Breast epithelium (tissue), 4 donors: ENCODE measurements at regions of chr11 and their contacts with region 1.

Region 1: GRCh38 chr11:118792570-118793124 is 1.7 kb upstream of the DDX6 start:
- DNase-seq: peak in 1 of 2 donors; percentile 77
- H3K4me3 ChIP-seq: peak overlapping the region; percentile 86 to 97 (median 87)
- H3K27ac ChIP-seq: peak overlapping the region; percentile 100
- H3K4me1 ChIP-seq: peaks cover 0 to 2% of the 10 kb centered on the region in 2 donors
- H3K27me3 ChIP-seq: no peaks in the 10 kb centered on the region
- CTCF ChIP-seq: no peak
- POLR2A ChIP-seq: peak; percentile 52

Region 2: GRCh38 chr11:118485273-118485672 is 307.4 kb before region 1 on chr11:
- intact Hi-C with region 1: no loop called
- DNase-seq: no peak
- H3K4me3 ChIP-seq: no peak overlapping the region
- H3K27ac ChIP-seq: no peak overlapping the region
- H3K4me1 ChIP-seq: no peaks in the 10 kb centered on the region
- H3K27me3 ChIP-seq: no peaks in the 10 kb centered on the region
- CTCF ChIP-seq: no peak
- POLR2A ChIP-seq: no peak

Region 3: GRCh38 chr11:118870396-118871345 is 78.0 kb after region 1 on chr11:
- intact Hi-C with region 1: loop called (anchors 2 kb)
- DNase-seq: peak; percentile 41 to 70
- H3K4me3 ChIP-seq: peak overlapping the region in 2 of 3 donors; percentile 11 to 52
- H3K27ac ChIP-seq: peak overlapping the region; percentile 95 to 97
- H3K4me1 ChIP-seq: peaks cover 0 to 3% of the 10 kb centered on the region in 2 donors
- H3K27me3 ChIP-seq: no peaks in the 10 kb centered on the region
- CTCF ChIP-seq: peak in 1 of 3 donors; percentile 14
- POLR2A ChIP-seq: no peak